Activated CD4-positive, alpha-beta memory T cell treated with anti-CD3 and anti-CD28 coated beads for 36 hours (primary cell): ENCODE measurements at regions of chr15 and their contacts with region 1.

Region 1: DNA sequence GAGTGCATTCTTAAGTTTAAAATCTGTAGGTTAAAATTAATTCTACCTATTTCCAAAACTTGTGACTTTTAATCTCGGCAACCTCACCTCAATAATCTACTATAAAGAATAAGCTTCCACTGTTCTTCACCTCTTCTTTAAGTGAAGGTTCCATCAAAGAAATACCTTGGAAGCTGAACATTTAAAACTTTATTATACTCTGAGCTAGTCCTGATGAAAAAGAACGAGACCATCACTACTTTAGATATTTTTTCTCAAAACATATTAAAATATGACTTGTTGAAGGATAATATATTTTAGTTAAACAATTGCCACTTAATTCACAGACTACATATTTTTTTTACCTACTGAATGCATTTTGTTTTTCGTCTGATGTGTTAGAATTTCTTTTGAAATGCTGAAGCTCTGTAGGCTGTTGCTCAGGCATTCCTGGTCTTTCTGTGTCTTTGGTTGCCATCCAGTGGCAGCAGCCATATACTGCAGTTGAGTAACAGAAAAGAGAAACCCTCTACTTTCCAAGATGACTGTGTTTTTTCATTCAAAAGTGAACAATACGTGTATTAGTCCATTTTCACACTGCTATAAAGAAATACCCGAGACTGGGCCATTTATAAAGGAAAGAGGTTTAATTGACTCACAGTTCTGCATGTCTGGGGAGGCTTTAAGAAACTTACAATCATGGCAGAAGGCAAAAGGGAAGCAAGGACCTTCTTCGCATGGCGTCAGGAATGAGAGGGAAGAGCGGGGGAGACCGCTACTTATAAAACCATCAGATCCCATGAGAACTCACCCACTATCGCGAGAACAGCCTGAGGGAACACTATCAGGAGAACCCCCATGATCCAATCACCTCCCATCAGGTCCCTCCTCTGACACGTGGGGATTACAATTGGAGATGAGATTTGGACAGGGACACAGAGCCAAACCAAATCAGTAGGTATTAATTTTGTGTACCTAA is 4.5 kb upstream of the GOLGA8B start:
- DNase-seq: peak; percentile 77
- H3K4me3 Mint-ChIP-seq: peak overlapping the region; percentile 76
- H3K27ac Mint-ChIP-seq: peak overlapping the region; percentile 65
- H3K4me1 Mint-ChIP-seq: peaks cover 13% of the 10 kb centered on the region
- H3K27me3 Mint-ChIP-seq: no peaks in the 10 kb centered on the region

Region 2: GRCh38 chr15:34055853-34056595 is 532.0 kb before region 1 on chr15:
- CTCF ChIA-PET with region 1: interaction called, 14 read pairs
- POLR2A ChIA-PET with region 1: no interaction called
- intact Hi-C with region 1: loop called (anchors 2 kb)
- DNase-seq: no peak
- H3K4me3 Mint-ChIP-seq: no peak overlapping the region
- H3K27ac Mint-ChIP-seq: no peak overlapping the region
- H3K4me1 Mint-ChIP-seq: no peaks in the 10 kb centered on the region
- H3K27me3 Mint-ChIP-seq: no peaks in the 10 kb centered on the region

Region 3: GRCh38 chr15:34101366-34102175 is 486.4 kb before region 1 on chr15 and contains the starts of genes EMC7 and PGBD4:
- CTCF ChIA-PET with region 1: interaction called, 3 read pairs
- POLR2A ChIA-PET with region 1: interaction called, 3 read pairs
- intact Hi-C with region 1: loop called (anchors 5 kb)
- DNase-seq: peak; percentile 100
- H3K4me3 Mint-ChIP-seq: peak within 1 kb of the TSS; percentile 99
- H3K27ac Mint-ChIP-seq: peak within 1 kb of the TSS; percentile 96
- H3K4me1 Mint-ChIP-seq: peaks cover 36% of the 10 kb centered on the region
- H3K27me3 Mint-ChIP-seq: no peaks in the 10 kb centered on the region
- total RNA-seq, gene EMC7: 62.7 to 68.4 TPM
- total RNA-seq, gene PGBD4: 2.0 to 2.3 TPM

Region 4: DNA sequence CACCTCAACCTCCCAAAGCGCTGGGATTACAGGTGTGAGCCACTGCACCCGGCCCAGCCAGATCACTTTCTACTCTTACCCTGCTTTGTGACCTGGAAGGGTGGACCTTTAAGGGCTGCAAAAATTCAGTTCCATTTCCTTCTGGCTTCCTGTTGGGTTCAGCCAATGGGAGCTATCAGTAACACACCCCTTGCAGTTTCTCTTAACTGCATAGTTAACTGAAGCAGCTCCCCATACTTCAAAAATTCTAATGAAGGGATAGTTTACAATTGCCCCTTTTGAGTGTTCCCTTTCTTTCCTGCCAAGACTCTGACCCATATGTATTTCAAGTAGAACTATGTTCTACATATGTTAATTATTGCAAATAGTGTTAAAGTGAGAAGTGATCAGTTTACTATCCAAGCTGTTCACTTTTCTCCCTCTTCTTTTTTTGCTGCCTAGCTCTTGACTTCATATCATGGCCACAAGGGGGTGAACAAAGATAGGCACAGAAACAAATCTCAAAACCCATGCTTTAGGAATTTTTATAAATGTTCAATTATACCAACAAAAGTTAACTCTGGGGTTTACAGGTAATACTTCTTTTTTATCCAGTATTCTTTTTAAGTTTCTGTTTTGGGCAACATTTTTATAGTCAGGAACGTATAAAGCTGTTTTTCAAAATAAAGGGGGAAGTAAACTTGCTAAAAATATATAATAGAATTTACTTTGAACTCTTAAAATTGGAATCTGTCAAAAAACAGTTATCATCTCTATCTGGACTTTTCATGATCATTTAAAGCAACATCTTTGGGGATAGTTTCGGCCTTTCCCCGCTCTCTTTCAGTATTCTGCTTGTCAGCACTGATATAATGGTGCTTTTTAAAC is 478.0 kb before region 1 on chr15:
- CTCF ChIA-PET with region 1: interaction called, 14 read pairs
- POLR2A ChIA-PET with region 1: no interaction called
- intact Hi-C with region 1: loop called (anchors 1 kb)
- DNase-seq: no peak
- H3K4me3 Mint-ChIP-seq: no peak overlapping the region
- H3K27ac Mint-ChIP-seq: no peak overlapping the region
- H3K4me1 Mint-ChIP-seq: no peaks in the 10 kb centered on the region
- H3K27me3 Mint-ChIP-seq: peaks cover 5% of the 10 kb centered on the region

Region 5: DNA sequence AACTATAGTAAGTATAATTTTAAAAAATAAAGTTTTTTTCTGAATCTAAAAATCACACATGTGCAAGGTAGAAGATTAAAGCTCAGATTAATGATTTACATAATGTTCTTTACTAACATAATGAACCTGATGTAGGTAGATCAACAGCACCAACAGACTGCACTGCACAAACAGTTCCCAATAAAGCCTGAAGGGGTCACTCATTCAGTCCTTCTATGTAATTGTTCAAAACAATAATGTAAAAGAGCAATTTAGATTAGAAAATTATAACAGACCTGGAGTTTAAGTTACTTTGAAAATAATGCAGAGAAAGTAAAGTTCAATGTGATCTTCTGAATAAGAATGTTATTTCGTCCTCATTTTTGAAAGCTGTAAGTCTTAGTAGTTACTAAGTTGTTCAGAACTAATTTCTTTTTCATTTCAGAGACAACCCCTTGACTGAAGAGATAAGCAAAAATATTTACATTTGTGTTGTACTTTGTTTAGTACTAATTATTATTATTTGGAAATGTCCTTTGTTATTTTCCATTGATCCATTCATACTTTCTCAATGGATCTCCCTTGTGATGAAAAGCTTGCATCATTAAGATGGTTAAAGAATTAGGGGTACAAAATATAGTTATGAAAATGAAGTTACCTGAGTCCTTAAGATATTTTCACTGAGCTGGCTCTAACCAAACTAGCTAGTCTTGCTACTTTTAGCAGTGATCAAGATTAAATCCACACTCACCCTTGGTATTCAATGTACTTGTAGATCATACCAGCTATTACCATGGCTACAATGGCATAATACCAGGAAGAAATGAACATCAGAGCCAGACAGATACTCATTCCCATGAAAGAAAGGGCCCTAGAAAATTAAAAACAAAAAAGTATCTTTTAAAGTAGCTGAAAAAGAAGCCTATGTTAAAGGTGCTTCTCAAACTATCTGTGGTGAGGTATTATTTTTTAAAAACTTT is 346.3 kb before region 1 on chr15:
- CTCF ChIA-PET with region 1: interaction called, 20 read pairs
- POLR2A ChIA-PET with region 1: no interaction called
- intact Hi-C with region 1: loop called (anchors 1 kb)
- DNase-seq: peak; percentile 31
- H3K4me3 Mint-ChIP-seq: no peak overlapping the region
- H3K27ac Mint-ChIP-seq: peak overlapping the region; percentile 64
- H3K4me1 Mint-ChIP-seq: peaks cover 38% of the 10 kb centered on the region
- H3K27me3 Mint-ChIP-seq: no peaks in the 10 kb centered on the region

Region 6: DNA sequence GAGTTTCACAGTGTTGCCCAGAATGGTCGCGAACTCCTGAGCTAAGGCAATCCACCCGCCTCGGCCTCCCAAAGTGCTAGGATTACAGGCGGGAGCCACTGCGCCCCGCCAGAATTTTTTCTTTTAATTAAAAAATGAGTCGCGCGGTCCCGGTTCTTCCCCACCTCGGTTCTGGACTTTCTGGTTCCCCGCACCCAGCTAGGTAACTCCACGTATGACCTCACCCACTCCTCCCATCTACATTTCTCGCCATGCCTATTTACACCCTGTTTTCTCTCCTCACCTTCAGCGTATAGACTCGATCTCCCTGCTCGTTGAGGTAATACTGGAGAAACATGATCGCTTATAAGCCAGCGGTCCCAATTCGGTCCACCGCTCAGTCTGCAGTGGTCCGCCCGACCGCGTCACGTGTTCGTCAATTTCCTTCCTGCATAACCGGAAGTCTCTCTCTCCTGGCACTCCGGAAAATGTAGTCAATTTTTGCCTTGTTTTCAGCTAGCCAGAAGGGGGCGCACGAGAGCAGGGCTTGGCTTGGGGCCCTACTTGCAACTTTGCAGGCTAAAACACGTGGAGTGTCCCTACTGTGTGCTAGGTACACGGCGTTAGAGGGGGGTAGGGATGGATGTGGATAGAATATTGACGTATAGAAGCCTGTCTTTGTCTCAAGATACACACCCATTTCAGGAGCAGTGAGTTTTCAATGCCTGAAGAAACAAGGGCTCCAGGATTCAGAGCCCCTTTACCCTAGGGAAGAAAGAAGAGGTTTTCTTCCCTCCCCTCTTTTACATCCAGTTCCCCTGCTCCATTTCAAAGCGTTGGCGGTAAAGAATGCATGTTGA is 245.0 kb before region 1 on chr15 and contains the starts of genes NOP10 and NUTM1:
- CTCF ChIA-PET with region 1: interaction called, 15 read pairs
- POLR2A ChIA-PET with region 1: interaction called, 3 read pairs
- intact Hi-C with region 1: loop called (anchors 1 kb)
- DNase-seq: peak; percentile 96
- H3K4me3 Mint-ChIP-seq: no peak within 1 kb of the TSS
- H3K27ac Mint-ChIP-seq: no peak within 1 kb of the TSS
- H3K4me1 Mint-ChIP-seq: peaks cover 29% of the 10 kb centered on the region
- H3K27me3 Mint-ChIP-seq: no peaks in the 10 kb centered on the region
- total RNA-seq, gene NOP10: 211 to 214 TPM
- total RNA-seq, gene NUTM1: not detected